Lower lobe of right lung (tissue), 2 donors: ENCODE measurements at regions of chr2 and their contacts with region 1.

Region 1: DNA sequence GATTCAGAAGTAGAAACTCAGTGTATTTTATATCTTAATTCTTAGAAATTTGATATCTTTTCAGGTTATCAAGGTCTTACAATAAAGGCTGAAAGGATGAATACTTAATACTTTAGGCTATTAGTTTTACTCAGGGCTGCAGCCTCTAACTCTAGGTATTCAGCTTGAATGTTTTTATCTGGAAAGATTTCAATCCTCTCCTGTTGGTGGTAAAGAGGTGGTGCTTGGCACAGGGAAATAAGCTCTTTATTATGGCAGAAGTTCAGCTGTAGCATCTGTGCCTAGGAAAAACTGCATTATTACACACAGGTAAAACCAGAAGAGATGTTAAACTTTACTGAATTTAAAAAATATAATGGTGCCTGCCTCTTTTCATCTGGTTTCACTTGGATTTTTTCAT is 11.1 kb downstream of the ACVR2A start:
- DNase-seq: no peak
- ATAC-seq: no peak
- H3K4me3 ChIP-seq: no peak overlapping the region
- H3K27ac ChIP-seq: no peak overlapping the region
- H3K4me1 ChIP-seq: peaks cover 47% of the 10 kb centered on the region
- H3K27me3 ChIP-seq: no peaks in the 10 kb centered on the region
- CTCF ChIP-seq: no peak

Region 2: DNA sequence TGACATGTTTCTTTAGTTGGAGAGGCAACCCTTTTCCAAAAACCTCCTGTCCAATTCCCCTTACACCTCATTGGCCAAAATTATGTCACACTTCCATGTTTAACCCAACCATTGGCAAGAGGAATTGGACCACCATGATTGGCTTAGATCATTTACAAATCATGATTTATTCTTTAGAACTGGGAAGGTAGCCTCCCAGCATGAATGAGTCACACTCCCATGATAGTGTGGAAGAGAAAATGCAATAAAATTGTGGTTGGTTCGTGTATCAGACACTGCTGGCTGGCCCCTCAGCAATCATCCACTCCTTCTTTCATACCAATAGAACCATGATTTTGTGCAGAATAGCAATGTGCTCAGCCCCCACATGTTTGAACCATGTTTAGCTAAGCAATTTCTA is 167.7 kb before region 1 on chr2:
- intact Hi-C with region 1: no loop called
- DNase-seq: no peak
- ATAC-seq: no peak
- H3K4me3 ChIP-seq: no peak overlapping the region
- H3K27ac ChIP-seq: no peak overlapping the region
- H3K4me1 ChIP-seq: no peaks in the 10 kb centered on the region
- H3K27me3 ChIP-seq: no peaks in the 10 kb centered on the region
- CTCF ChIP-seq: no peak

Region 3: GRCh38 chr2:147904044-147904443 is 48.1 kb after region 1 on chr2:
- intact Hi-C with region 1: loop called (anchors 10 kb)
- DNase-seq: no peak
- ATAC-seq: no peak
- H3K4me3 ChIP-seq: no peak overlapping the region
- H3K27ac ChIP-seq: no peak overlapping the region
- H3K4me1 ChIP-seq: no peaks in the 10 kb centered on the region
- H3K27me3 ChIP-seq: no peaks in the 10 kb centered on the region
- CTCF ChIP-seq: no peak

Region 4: GRCh38 chr2:149313512-149313972 is 1457.6 kb after region 1 on chr2:
- intact Hi-C with region 1: no loop called
- DNase-seq: no peak
- ATAC-seq: peak; percentile 80 to 82
- H3K4me3 ChIP-seq: no peak overlapping the region
- H3K27ac ChIP-seq: no peak overlapping the region
- H3K4me1 ChIP-seq: no peaks in the 10 kb centered on the region
- H3K27me3 ChIP-seq: peaks cover 14% of the 10 kb centered on the region
- CTCF ChIP-seq: peak; percentile 75